ENCODE measurements at regions of chr10 and their contacts with region 1.

Region 1: GRCh38 chr10:49518982-49519578 is 19.8 kb downstream of the ERCC6 start:
- DNase-seq: peak in 1 of 2 experiments; percentile 40
- H3K4me3 ChIP-seq: no peak overlapping the region
- H3K27ac ChIP-seq: no peak overlapping the region
- H3K4me1 ChIP-seq: no peaks in the 10 kb centered on the region
- H3K27me3 ChIP-seq: no peaks in the 10 kb centered on the region
- CTCF ChIP-seq: peak; percentile 94

Region 2: GRCh38 chr10:48981310-48981907 is 537.7 kb before region 1 on chr10:
- CTCF ChIA-PET with region 1: no interaction called
- POLR2A ChIA-PET with region 1: no interaction called
- intact Hi-C with region 1: loop called (anchors 1 kb)
- DNase-seq: peak in 1 of 2 experiments; percentile 55
- H3K4me3 ChIP-seq: no peak overlapping the region
- H3K27ac ChIP-seq: no peak overlapping the region
- H3K4me1 ChIP-seq: no peaks in the 10 kb centered on the region
- H3K27me3 ChIP-seq: peaks cover 11% of the 10 kb centered on the region; the same call in 1 of the 2 replicates
- CTCF ChIP-seq: peak; percentile 81

Measured in PC-9 (cell line).